Calu3 (cell line): ENCODE measurements at regions of chr6 and their contacts with region 1.

Region 1: GRCh38 chr6:127464881-127465459 is 5.8 kb upstream of the KIAA0408 start:
- DNase-seq: peak; percentile 71
- H3K4me3 Mint-ChIP-seq: no peak overlapping the region
- H3K27ac Mint-ChIP-seq: no peak overlapping the region
- H3K4me1 Mint-ChIP-seq: no peaks in the 10 kb centered on the region
- H3K27me3 Mint-ChIP-seq: no peaks in the 10 kb centered on the region
- CTCF ChIP-seq: peak; percentile 65

Region 2: DNA sequence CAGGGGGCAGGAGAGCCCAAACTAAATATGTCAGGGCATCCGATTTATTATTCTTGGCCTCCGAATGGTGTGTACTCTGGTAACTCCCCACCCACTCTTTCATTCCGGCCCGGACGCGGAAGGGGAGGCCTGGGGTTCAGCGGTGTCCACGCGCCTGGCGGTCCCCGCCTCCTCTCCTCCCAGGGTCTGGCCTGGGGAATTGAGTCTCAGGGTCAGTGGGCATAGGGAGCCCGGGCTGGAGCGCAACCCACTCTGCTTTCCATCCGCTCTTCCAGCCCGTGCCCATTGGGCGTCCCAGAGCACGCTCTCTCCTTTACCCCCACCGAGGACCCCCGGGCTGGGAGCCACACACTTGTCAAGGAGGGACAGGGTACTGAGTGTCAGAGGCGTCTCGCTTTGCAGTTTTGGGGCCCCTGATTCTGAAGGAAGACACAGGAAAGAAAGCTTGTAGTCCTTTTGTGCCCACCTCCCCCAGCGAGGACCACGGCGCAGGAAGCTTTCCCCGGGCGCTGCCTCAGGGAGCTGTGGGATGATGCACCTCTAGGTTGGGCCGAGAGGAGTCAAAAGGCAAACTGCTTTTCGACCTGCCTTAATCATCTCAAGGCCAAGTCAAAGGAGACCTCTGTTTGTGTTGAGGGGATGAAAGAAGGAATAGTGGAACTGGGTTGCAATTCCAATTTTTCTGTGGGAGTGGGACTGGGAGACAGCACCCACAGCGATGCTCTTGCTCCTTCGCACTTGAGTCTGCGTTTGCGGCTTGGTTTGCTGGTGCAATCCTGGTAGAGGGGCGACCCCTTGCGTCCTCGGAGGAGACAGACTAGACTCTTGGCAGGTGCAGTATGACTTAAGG is 344.0 kb before region 1 on chr6:
- CTCF ChIA-PET with region 1: no interaction called
- intact Hi-C with region 1: no loop called
- DNase-seq: peak; percentile 85
- H3K4me3 Mint-ChIP-seq: peak overlapping the region; percentile 74
- H3K27ac Mint-ChIP-seq: no peak overlapping the region
- H3K4me1 Mint-ChIP-seq: peaks cover 20% of the 10 kb centered on the region
- H3K27me3 Mint-ChIP-seq: peaks cover 42% of the 10 kb centered on the region
- CTCF ChIP-seq: peak; percentile 79

Region 3: GRCh38 chr6:127397729-127398630 is 67.0 kb before region 1 on chr6:
- CTCF ChIA-PET with region 1: no interaction called
- intact Hi-C with region 1: no loop called
- DNase-seq: no peak
- H3K4me3 Mint-ChIP-seq: no peak overlapping the region
- H3K27ac Mint-ChIP-seq: no peak overlapping the region
- H3K4me1 Mint-ChIP-seq: peaks cover 8% of the 10 kb centered on the region
- H3K27me3 Mint-ChIP-seq: no peaks in the 10 kb centered on the region
- CTCF ChIP-seq: no peak

Region 4: DNA sequence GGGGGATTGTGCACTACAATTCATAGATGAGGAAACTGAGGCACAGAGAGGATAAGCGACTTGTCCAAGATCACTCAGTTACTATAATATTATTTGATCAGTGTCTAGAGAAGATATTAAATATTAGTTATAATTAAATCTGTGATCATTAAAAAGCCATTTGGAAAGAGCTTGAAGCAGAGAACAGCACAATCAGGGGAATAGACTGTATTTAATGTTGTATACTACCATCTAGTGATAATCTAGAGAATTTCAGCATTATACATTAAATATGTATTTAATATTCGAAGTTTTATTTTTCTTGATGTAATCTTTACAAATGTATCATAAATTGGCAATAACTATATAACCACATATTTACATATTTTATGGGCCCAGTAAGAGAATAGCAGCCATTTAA is 74.3 kb after region 1 on chr6:
- CTCF ChIA-PET with region 1: interaction called, 9 read pairs
- intact Hi-C with region 1: loop called (anchors 1 kb)
- DNase-seq: no peak
- H3K4me3 Mint-ChIP-seq: no peak overlapping the region
- H3K27ac Mint-ChIP-seq: no peak overlapping the region
- H3K4me1 Mint-ChIP-seq: no peaks in the 10 kb centered on the region
- H3K27me3 Mint-ChIP-seq: no peaks in the 10 kb centered on the region
- CTCF ChIP-seq: no peak